ENCODE measurements at regions of chr7 and their contacts with region 1.

Region 1: GRCh38 chr7:63012633-63013183 is 985.9 kb upstream of the ZNF722 start:
- DNase-seq: no peak
- H3K4me3 ChIP-seq: no peak overlapping the region
- H3K27ac ChIP-seq: no peak overlapping the region
- H3K4me1 ChIP-seq: no peaks in the 10 kb centered on the region
- H3K27me3 ChIP-seq: no peaks in the 10 kb centered on the region
- CTCF ChIP-seq: no peak
- POLR2A ChIP-seq: no peak

Region 2: DNA sequence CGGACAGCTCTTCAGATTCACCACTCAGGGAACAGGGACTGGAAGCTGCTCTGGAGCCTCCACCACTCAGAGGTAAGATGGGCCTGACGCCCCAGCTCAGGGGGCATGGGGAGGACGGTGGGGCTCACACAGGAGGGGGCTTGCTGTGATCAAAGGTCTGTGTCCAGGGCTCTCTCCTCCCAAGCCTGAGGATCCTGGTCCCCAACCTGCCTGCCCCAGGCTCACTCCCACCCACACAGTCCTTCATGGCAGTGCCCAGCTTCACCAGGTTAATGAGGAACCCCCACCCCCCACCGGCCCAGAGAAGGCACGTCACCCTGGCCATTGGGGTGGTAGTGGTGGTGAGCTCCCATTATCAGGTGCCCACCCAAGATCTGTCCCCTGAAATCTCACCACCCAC is 59.2 kb after region 1 on chr7:
- intact Hi-C with region 1: loop called (anchors 10 kb)
- DNase-seq: no peak
- H3K4me3 ChIP-seq: no peak overlapping the region
- H3K27ac ChIP-seq: no peak overlapping the region
- H3K4me1 ChIP-seq: no peaks in the 10 kb centered on the region
- H3K27me3 ChIP-seq: no peaks in the 10 kb centered on the region
- CTCF ChIP-seq: no peak
- POLR2A ChIP-seq: no peak

Region 3: DNA sequence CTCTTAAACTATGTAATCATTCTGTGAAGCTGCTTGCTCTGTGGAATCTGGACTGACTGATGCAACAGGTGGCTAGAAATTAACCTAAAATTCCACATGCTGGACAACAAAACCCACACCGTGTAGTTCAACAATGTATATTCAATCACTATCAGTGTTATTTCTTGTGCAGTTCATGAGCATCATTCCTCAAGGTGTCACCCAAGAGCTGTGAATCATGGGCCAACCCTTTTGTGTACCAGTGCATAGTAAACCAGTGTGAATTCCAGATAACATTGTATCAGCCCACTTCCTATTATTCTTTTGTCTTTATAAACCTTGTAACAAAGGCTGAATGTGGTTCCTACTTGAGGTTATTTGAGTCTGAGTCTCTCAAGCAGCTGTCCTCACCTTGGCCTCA is 80.8 kb after region 1 on chr7:
- intact Hi-C with region 1: no loop called
- DNase-seq: no peak
- H3K4me3 ChIP-seq: no peak overlapping the region
- H3K27ac ChIP-seq: no peak overlapping the region
- H3K4me1 ChIP-seq: no peaks in the 10 kb centered on the region
- H3K27me3 ChIP-seq: no peaks in the 10 kb centered on the region
- CTCF ChIP-seq: no peak
- POLR2A ChIP-seq: no peak

Measured in uterus (tissue), 4 donors.